Stomach (tissue), 19 donors: ENCODE measurements at regions of chr11 and their contacts with region 1.

Region 1: GRCh38 chr11:63951779-63952536 is 13.2 kb downstream of the NAA40 start:
- DNase-seq: no peak
- H3K4me3 ChIP-seq: no peak overlapping the region
- H3K27ac ChIP-seq: peak overlapping the region in 1 of 5 donors; percentile 20
- H3K4me1 ChIP-seq: no peaks in the 10 kb centered on the region
- H3K27me3 ChIP-seq: no peaks in the 10 kb centered on the region
- CTCF ChIP-seq: no peak
- EP300 ChIP-seq: no peak
- POLR2A ChIP-seq: no peak

Region 2: DNA sequence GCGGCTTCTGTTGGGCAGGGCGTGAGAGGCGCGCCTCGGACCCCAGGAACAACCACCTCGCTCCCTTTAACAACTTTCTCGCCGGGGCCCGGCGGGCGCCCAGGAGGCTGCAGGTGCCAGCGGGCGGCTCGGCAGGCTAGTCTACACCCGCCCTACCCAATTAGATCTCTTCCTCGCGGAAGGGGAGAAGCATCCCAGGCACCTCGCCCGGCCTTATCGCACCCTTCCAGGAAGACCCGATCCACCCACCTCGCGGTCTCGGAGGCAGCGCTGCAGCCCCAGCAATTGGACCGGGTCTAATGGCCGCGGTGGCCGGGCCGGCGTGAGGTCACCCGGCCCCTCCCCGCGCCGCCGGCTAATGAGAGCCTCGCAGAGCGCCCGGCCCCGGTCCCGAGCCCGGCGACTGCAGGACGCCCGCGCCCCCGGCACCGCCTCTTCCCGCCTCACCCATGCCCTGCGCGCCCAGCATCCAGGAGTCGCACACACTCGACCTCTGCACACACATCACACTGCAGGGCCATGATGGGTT is 337.8 kb before region 1 on chr11 and contains the start of gene PLAAT3:
- intact Hi-C with region 1: no loop called
- DNase-seq: peak; percentile 82 to 85
- H3K4me3 ChIP-seq: peak within 1 kb of the TSS; percentile 56 to 81 (median 78)
- H3K27ac ChIP-seq: peak within 1 kb of the TSS; percentile 79 to 91 (median 84)
- H3K4me1 ChIP-seq: peaks cover 12 to 46% (median 35%) of the 10 kb centered on the region in 4 donors
- H3K27me3 ChIP-seq: no peaks in the 10 kb centered on the region
- CTCF ChIP-seq: no peak
- EP300 ChIP-seq: no peak
- POLR2A ChIP-seq: peak in 1 of 4 donors; percentile 45
- total RNA-seq, gene PLAAT3: 10.6 to 25.9 (median 21.0) TPM in 3 of 5 donors, not detected in the others

Region 3: GRCh38 chr11:63829823-63830489 is 122.0 kb before region 1 on chr11:
- intact Hi-C with region 1: loop called (anchors 5 kb)
- DNase-seq: peak in 1 of 2 donors; percentile 68
- H3K4me3 ChIP-seq: no peak overlapping the region
- H3K27ac ChIP-seq: no peak overlapping the region
- H3K4me1 ChIP-seq: peaks cover 0 to 9% (median 4%) of the 10 kb centered on the region in 4 donors
- H3K27me3 ChIP-seq: no peaks in the 10 kb centered on the region
- CTCF ChIP-seq: no peak
- EP300 ChIP-seq: no peak
- POLR2A ChIP-seq: no peak